ENCODE measurements at regions of chr12 and their contacts with region 1.

Region 1: GRCh38 chr12:94172973-94173372 is 24.6 kb downstream of the PLXNC1 start:
- DNase-seq: peak; percentile 93
- H3K4me3 Mint-ChIP-seq: peak overlapping the region; percentile 56
- H3K27ac Mint-ChIP-seq: peak overlapping the region; percentile 77
- H3K4me1 Mint-ChIP-seq: peaks cover 38% of the 10 kb centered on the region
- H3K27me3 Mint-ChIP-seq: peaks cover 12% of the 10 kb centered on the region
- CTCF ChIP-seq: no peak

Region 2: DNA sequence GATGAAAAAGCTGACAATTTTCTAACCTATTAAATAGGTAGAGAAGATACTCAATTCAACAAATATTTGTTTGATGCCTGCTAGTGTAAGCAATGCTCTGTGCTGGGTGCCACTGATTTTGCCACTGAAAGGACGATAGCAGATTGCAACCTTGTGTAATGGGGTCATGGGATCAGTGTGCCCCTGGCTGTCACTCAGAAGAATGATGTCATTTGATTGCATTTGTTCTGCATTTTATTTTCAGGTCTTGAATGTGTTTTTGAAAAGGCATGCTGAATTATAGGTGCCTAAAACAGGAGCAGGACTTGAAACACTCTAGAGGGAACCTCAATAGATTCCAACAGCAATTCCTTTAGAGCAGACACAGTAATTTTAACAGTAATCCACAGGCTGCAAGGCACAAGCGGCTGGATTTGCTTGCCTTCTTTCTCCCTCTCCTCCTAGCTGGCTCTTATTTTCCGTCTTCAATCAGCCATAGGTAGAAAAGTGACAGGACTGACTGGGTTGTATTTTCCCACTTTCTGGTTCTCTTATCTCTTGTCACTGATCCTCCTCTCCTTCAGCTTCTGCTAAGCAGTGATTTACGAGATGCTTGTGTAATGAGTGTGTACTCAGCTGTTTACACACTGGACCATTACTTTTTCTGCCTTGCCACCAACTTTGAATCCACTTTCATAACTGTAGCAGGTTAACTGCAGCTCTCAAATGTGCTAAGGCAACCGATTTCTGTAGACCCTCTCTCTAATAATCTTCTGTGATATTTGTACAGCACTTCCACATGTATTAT is 20.5 kb before region 1 on chr12:
- CTCF ChIA-PET with region 1: no interaction called
- POLR2A ChIA-PET with region 1: no interaction called
- intact Hi-C with region 1: no loop called
- DNase-seq: no peak
- H3K4me3 Mint-ChIP-seq: no peak overlapping the region
- H3K27ac Mint-ChIP-seq: no peak overlapping the region
- H3K4me1 Mint-ChIP-seq: no peaks in the 10 kb centered on the region
- H3K27me3 Mint-ChIP-seq: peaks cover 42% of the 10 kb centered on the region
- CTCF ChIP-seq: no peak

Region 3: GRCh38 chr12:94184995-94185719 is 12.2 kb after region 1 on chr12:
- CTCF ChIA-PET with region 1: no interaction called
- POLR2A ChIA-PET with region 1: interaction called, 11 read pairs
- intact Hi-C with region 1: no loop called
- DNase-seq: no peak
- H3K4me3 Mint-ChIP-seq: no peak overlapping the region
- H3K27ac Mint-ChIP-seq: no peak overlapping the region
- H3K4me1 Mint-ChIP-seq: peaks cover 9% of the 10 kb centered on the region
- H3K27me3 Mint-ChIP-seq: no peaks in the 10 kb centered on the region
- CTCF ChIP-seq: no peak

Region 4: GRCh38 chr12:94202245-94203180 is 29.5 kb after region 1 on chr12:
- CTCF ChIA-PET with region 1: interaction called, 3 read pairs
- POLR2A ChIA-PET with region 1: interaction called, 17 read pairs
- intact Hi-C with region 1: no loop called
- DNase-seq: peak; percentile 66
- H3K4me3 Mint-ChIP-seq: no peak overlapping the region
- H3K27ac Mint-ChIP-seq: peak overlapping the region; percentile 78
- H3K4me1 Mint-ChIP-seq: peaks cover 21% of the 10 kb centered on the region
- H3K27me3 Mint-ChIP-seq: no peaks in the 10 kb centered on the region
- CTCF ChIP-seq: no peak

Region 5: DNA sequence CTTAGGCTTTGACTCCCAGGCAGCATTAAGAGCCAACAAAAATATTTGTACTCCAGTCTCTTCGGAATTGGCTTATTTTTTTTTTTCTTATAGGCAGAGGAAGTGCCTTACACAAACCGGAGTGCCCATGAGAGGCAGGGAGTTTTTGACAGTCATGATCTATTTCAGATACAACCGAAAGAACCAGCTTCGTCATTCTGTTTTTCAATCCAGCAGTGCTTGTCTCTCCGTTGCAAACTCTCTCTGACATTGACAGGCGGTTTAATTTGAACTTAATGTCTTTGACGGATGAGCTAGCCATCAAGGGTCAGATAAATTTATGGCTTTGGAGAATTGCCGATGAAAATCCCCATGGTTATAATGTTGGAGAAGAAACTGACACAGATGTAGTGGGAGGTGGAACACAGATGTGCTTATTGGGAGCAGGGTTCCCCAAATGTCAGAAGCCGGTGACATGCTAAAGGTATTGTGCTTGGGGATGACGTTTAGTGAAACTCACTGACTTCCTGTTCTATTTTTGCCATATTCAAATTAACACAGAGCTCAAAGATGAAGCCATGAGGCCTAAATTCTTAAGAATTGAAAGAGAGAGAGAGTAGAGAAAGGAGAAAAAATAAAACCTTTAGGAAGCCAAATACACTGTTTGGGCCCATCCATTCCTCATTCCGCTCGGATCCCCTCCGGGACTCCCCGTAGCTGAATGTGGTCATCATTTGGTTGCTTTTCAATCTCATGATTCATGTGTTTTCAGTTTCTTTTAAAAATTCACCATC is 35.1 kb after region 1 on chr12:
- CTCF ChIA-PET with region 1: interaction called, 3 read pairs
- POLR2A ChIA-PET with region 1: interaction called, 17 read pairs
- intact Hi-C with region 1: no loop called
- DNase-seq: peak; percentile 61
- H3K4me3 Mint-ChIP-seq: no peak overlapping the region
- H3K27ac Mint-ChIP-seq: peak overlapping the region; percentile 72
- H3K4me1 Mint-ChIP-seq: peaks cover 18% of the 10 kb centered on the region
- H3K27me3 Mint-ChIP-seq: no peaks in the 10 kb centered on the region
- CTCF ChIP-seq: no peak

Region 6: DNA sequence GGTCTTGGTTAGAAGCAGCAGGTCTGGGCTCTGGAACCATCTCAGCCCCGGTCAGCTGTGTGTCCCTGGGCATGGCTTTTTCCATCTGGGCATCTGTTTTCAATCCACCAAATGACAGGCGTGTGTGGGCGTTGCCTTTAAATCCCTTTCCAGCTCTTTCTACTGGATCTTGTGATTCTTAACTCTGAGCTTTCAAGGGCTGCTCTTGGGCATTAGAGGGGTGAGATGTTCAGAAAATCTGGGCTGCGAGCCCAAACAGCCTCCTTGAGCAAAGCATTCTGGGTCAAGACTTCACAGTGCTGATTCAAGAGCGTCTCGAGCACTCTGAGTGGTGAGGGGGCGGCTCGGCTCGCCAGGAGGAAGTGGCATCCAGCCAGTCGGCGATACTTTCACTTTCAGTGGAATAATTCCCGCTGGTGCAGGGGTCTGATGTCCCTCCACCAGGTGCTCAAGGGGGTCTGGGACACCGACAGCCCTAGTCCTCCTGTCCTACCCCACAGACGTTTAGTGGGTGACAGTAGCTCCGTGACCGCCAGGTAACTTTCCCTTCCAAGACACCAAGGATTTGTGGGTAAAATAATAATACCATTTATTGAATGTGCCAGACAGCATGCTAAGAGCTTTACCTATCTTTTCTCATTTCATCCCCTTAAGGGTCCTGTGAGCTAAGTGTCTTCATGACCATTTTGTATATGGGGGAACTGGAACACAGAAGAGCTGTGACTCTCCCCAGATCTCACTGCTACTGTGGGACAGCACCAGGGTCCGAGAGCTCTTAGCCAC is 89.4 kb after region 1 on chr12:
- CTCF ChIA-PET with region 1: no interaction called
- POLR2A ChIA-PET with region 1: interaction called, 12 read pairs
- intact Hi-C with region 1: no loop called
- DNase-seq: peak; percentile 87
- H3K4me3 Mint-ChIP-seq: peak overlapping the region; percentile 81
- H3K27ac Mint-ChIP-seq: peak overlapping the region; percentile 87
- H3K4me1 Mint-ChIP-seq: peaks cover 13% of the 10 kb centered on the region
- H3K27me3 Mint-ChIP-seq: no peaks in the 10 kb centered on the region
- CTCF ChIP-seq: no peak

Region 7: GRCh38 chr12:94401326-94401725 is 228.4 kb after region 1 on chr12:
- CTCF ChIA-PET with region 1: no interaction called
- POLR2A ChIA-PET with region 1: no interaction called
- intact Hi-C with region 1: no loop called
- DNase-seq: no peak
- H3K4me3 Mint-ChIP-seq: no peak overlapping the region
- H3K27ac Mint-ChIP-seq: no peak overlapping the region
- H3K4me1 Mint-ChIP-seq: peaks cover 10% of the 10 kb centered on the region
- H3K27me3 Mint-ChIP-seq: no peaks in the 10 kb centered on the region
- CTCF ChIP-seq: no peak

Region 8: DNA sequence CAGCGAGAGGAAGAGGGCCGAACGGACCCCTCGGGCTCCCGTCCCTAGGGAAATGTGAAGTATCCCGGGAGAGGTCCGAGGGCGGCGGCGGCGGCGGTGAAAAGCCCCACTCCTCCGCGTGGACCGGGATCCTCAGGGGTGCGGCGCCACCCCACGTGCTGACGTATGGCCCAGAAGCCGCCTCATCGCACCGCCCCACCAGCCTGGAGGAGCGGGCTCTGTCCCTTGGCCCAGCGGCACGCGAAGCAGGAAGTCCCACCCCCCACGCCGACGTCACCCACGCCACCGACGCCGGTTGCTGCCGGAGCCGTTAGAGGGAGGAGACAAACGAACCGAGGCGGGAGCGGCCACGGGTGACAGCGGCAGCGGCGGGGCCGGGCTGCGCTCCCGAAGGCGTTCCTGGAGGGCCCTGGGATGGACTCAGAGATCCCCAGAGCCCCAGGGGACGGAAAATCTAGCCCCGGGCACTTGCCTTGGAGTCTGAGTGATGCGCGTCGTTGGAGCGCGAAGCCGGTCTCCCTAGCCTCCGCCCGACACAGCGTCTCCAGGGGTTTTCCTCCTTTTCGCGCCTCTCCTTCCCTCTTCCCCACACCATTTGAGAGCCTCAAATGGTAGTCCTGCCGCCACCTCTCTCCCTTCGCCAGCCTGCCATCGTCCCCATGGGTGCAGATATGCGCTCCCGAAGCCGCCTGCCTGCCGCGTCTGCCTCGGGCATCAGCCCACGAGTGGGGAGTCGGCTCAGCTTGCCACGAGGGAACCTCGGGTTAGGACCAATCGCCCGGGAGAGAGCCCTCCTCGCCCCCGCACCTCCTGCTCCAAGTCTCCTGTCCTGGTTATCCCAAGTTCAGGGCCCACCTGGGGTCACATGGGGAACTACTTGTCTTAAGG is 287.0 kb after region 1 on chr12 and contains the start of gene CEP83:
- CTCF ChIA-PET with region 1: no interaction called
- POLR2A ChIA-PET with region 1: interaction called, 12 read pairs
- intact Hi-C with region 1: no loop called
- DNase-seq: peak; percentile 93
- H3K4me3 Mint-ChIP-seq: peak within 1 kb of the TSS; percentile 78
- H3K27ac Mint-ChIP-seq: peak within 1 kb of the TSS; percentile 81
- H3K4me1 Mint-ChIP-seq: peaks cover 12% of the 10 kb centered on the region
- H3K27me3 Mint-ChIP-seq: no peaks in the 10 kb centered on the region
- CTCF ChIP-seq: no peak
- total RNA-seq, gene CEP83: 24.2 and 28.1 TPM in 2 replicates

Measured in MCF 10A (cell line).